Activated naive CD4-positive, alpha-beta T cell treated with anti-CD3 and anti-CD28 coated beads for 36 hours (primary cell): ENCODE measurements at regions of chr13 and their contacts with region 1.

Region 1: GRCh38 chr13:28494776-28495537 is at the start of gene FLT1:
- DNase-seq: peak; percentile 61
- H3K4me3 Mint-ChIP-seq: peak within 1 kb of the TSS; percentile 77
- H3K27ac Mint-ChIP-seq: peak within 1 kb of the TSS; percentile 77
- H3K4me1 Mint-ChIP-seq: peaks cover 23% of the 10 kb centered on the region
- H3K27me3 Mint-ChIP-seq: peaks cover 31% of the 10 kb centered on the region
- total RNA-seq, gene FLT1: 21.8 to 21.9 TPM

Region 2: GRCh38 chr13:28268800-28269223 is 226.1 kb before region 1 on chr13:
- CTCF ChIA-PET with region 1: no interaction called
- intact Hi-C with region 1: no loop called
- DNase-seq: no peak
- H3K4me3 Mint-ChIP-seq: no peak overlapping the region
- H3K27ac Mint-ChIP-seq: peak overlapping the region; percentile 34
- H3K4me1 Mint-ChIP-seq: peaks cover 14% of the 10 kb centered on the region
- H3K27me3 Mint-ChIP-seq: no peaks in the 10 kb centered on the region

Region 3: DNA sequence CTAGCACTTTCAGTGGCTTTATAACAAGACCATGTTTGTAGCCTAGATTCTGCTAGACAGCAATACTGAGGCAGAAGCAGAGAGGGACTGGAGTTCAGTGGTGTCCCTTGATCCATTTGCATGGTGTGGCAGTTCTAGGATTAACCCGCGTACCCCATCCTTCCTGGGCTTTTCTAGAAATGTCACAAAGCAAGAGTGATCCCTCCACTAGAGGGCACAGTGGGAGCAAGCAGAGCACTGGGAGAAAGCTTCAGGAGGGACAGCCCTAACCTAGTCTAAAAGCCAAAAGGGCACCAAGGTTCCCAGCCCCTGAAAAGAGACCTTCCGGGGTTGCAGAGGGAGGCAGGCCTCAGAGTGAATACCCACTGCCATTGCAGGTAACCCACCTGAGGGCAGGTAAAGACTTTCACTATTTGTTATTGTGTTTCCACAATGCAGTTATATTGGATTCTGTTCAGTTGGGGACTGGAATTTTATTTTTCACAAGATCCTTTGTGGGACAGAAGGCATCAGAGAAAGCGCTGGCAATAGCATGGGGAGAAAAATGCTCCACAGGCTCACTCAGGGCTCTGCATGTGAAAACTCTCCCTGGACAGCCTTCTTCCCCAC is 170.7 kb before region 1 on chr13:
- CTCF ChIA-PET with region 1: no interaction called
- intact Hi-C with region 1: loop called (anchors 5 kb)
- DNase-seq: peak; percentile 79
- H3K4me3 Mint-ChIP-seq: no peak overlapping the region
- H3K27ac Mint-ChIP-seq: no peak overlapping the region
- H3K4me1 Mint-ChIP-seq: no peaks in the 10 kb centered on the region
- H3K27me3 Mint-ChIP-seq: no peaks in the 10 kb centered on the region

Region 4: GRCh38 chr13:28357911-28358433 is 137.0 kb before region 1 on chr13:
- CTCF ChIA-PET with region 1: no interaction called
- intact Hi-C with region 1: loop called (anchors 2 kb)
- DNase-seq: peak; percentile 15
- H3K4me3 Mint-ChIP-seq: no peak overlapping the region
- H3K27ac Mint-ChIP-seq: peak overlapping the region; percentile 14
- H3K4me1 Mint-ChIP-seq: peaks cover 25% of the 10 kb centered on the region
- H3K27me3 Mint-ChIP-seq: no peaks in the 10 kb centered on the region

Region 5: DNA sequence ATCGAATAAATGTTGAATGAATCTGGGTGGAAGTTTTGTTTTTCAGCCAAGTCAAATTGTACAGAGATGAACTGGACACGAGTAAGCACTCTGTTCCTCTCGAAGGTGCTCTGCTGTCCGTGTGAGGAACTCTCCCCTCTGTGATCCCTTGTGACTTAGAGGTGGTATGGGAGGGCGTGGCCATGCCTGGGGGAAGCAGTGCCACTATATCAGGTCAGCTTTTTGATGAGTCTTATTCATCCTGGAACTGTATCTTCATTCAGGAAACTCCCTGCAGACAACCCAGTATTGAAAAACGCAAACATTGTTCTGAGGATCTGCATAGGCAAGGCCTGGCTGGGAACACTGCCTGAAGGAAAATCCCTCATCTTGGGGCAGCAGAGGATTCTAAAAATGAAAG is 45.7 kb after region 1 on chr13:
- CTCF ChIA-PET with region 1: no interaction called
- intact Hi-C with region 1: loop called (anchors 1 kb)
- DNase-seq: peak; percentile 27
- H3K4me3 Mint-ChIP-seq: no peak overlapping the region
- H3K27ac Mint-ChIP-seq: peak overlapping the region; percentile 82
- H3K4me1 Mint-ChIP-seq: peaks cover 23% of the 10 kb centered on the region
- H3K27me3 Mint-ChIP-seq: peaks cover 5% of the 10 kb centered on the region

Region 6: GRCh38 chr13:28597641-28598040 is 102.7 kb after region 1 on chr13:
- CTCF ChIA-PET with region 1: no interaction called
- intact Hi-C with region 1: no loop called
- DNase-seq: no peak
- H3K4me3 Mint-ChIP-seq: no peak overlapping the region
- H3K27ac Mint-ChIP-seq: no peak overlapping the region
- H3K4me1 Mint-ChIP-seq: no peaks in the 10 kb centered on the region
- H3K27me3 Mint-ChIP-seq: peaks cover 20% of the 10 kb centered on the region

Region 7: DNA sequence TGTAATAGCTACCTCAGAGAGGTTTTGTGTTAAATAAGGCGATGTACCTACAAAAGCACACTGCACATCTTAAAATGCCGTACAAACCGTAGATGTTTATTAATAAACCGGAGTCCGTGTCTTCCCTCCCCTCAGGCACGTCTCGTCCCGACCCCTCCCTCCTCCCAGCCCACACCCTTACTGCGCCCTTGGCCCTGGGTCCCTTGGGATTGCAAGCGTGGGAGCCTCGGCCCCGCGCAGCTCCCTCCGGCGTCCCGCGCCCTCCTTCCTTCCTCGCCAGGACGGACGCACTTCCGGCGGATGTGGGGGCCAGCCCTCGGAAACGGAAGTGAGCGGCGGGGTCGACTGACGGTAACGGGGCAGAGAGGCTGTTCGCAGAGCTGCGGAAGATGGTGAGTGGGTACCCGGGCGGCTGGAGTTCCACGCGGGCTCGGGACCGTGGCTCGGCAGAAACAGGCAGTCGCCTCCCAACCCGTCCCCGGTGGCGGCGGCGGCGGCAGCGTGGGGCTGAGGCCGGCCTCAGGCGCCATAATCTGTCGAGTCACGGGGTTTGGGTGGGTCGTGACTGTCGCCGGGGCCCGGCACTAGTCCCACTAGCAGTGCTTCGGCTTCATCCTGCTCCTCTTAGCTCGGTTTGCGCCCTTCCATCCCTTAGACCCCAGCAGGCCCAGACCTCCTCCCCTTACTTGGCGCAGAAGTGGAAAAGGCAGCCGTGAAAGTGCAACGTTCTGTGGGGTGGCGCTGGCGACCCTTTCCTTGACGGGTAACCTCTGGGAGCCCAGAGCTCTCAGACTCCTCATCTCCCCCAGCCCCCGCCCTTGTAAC is 164.1 kb after region 1 on chr13 and contains the start of gene POMP:
- CTCF ChIA-PET with region 1: no interaction called
- intact Hi-C with region 1: loop called (anchors 1 kb)
- DNase-seq: peak; percentile 95
- H3K4me3 Mint-ChIP-seq: peak within 1 kb of the TSS; percentile 97
- H3K27ac Mint-ChIP-seq: peak within 1 kb of the TSS; percentile 98
- H3K4me1 Mint-ChIP-seq: peaks cover 56% of the 10 kb centered on the region
- H3K27me3 Mint-ChIP-seq: no peaks in the 10 kb centered on the region
- total RNA-seq, gene POMP: 106 to 108 TPM